ENCODE measurements at regions of chr12 and their contacts with region 1.

Region 1: DNA sequence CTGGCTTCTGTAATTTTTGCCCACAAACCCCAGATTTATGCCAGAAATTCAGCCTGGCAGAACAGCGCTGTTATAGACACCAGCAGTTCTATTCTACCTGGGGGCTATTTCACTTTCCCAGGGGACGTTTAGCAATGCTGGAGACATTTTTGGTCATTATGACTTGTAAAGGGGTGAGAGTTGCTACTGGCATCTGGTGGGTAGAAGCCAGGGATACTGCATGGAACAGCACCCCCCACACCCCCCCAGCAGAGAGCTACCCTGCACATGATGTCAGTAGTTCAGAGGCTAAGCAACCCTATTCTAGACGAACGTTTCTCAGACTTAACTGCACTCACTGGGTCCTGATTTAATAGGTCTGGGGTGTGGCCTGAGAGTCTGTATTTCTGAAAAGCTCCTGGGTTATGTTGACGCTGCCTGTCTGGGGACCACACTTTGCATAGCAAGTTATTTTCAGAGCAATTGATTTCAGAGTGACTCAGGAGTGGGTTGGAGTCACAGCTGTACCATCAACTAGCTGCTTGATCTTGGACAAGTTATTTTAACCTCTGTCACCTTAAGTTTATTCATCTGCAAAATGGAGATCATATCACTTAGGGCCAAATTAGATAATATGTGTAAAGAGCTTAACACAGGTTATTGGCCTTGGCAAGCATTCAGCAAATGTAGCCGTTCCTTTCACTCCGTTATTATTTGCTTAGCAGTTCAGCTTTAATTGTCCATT is 48.5 kb downstream of the CHST11 start:
- DNase-seq: peak; percentile 64
- ATAC-seq: peak; percentile 88
- H3K4me3 ChIP-seq: peak overlapping the region; percentile 37; the same call in 1 of the 2 replicates
- H3K27ac ChIP-seq: peak overlapping the region; percentile 43; the same call in 1 of the 2 replicates
- H3K4me1 ChIP-seq: peaks cover 43% of the 10 kb centered on the region
- H3K27me3 ChIP-seq: no peaks in the 10 kb centered on the region
- CTCF ChIP-seq: no peak
- EP300 ChIP-seq: no peak
- POLR2A ChIP-seq: no peak
- RAD21 ChIP-seq: no peak

Region 2: DNA sequence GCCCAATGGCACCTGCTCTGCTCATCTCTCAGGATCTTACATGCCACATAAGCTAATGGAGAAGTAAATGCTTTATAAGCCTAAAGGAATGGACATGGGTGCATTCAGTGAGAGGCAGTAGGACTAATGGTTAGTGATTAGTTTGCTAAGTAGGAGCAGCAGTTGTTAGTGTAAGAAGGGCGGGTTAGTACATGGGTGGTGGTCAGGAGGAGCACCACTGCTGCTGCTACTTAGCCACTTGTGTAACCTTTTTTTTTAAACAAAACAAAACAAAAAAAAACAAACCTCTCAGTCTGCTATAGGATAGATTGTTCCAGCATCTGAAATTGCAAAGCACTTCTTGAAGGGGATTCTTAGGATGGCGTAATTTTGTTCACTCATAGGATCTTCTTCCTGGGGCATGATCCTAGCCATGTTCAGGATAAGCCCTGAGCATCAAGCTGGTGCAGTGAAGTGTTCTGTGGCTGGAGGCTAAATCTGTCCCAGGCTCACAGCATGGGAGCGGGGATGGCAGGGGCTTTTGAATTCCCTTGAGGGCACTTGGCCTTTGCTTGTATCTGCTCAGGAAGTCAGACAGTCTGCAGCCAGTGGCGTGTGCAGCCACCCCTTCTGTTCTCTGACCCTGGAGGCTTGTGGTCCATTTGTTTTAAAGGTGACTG is 15.1 kb after region 1 on chr12:
- CTCF ChIA-PET with region 1: interaction called, 4 read pairs
- POLR2A ChIA-PET with region 1: interaction called, 3 read pairs
- RAD21 ChIA-PET with region 1: interaction called, 4 read pairs
- SMC1A ChIA-PET with region 1: interaction called, 25 read pairs
- in situ Hi-C with region 1: no loop called
- intact Hi-C with region 1: no loop called
- DNase-seq: peak; percentile 75
- ATAC-seq: peak; percentile 79
- H3K4me3 ChIP-seq: no peak overlapping the region
- H3K27ac ChIP-seq: peak overlapping the region; percentile 60
- H3K4me1 ChIP-seq: peaks cover 49% of the 10 kb centered on the region
- H3K27me3 ChIP-seq: no peaks in the 10 kb centered on the region
- CTCF ChIP-seq: no peak
- EP300 ChIP-seq: peak; percentile 31 to 50; a peak in 1 of 4 replicates
- POLR2A ChIP-seq: no peak
- RAD21 ChIP-seq: no peak

Region 3: DNA sequence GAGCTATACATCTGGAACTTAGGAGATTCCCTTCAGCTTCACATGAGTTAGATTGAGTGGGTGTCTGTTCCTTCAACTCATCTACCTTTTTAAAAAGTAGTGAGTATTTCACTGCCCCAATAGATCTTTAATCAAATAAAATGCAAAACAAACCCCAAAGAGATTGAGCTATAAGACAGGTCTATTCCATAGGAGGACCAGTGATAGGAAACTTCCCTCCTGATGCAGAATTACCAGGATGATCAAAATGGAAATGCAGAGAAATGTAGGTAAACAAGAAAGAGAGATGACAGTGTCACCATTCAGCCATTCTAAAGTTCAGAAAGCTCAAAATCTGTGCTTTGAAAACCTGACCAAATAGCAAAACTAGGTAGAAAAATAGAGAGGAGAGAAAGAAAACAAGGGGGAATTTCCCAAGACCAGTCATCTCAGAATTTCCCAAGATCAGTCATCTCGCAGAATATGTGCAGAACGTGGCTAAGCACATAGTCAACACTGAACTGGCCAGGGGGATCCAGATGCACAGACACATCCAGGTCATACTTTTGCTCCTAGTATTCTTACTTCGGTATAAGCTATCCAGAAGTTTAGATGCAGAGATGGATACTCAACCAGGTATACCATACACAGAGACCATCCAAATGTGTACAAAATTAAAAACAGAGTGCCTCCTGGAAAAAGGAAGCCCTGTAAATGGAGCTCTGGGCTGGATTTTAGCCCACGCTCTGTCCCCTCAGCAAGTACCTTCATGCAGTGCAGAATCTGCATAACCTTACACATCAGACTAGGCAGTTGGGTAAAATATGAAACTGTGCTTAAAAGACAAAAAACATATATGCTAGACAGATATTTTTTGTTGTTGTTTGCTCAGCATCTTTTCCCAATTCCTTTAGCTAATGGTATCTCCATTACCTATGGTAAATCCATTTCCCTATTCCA is 425.4 kb after region 1 on chr12:
- CTCF ChIA-PET with region 1: no interaction called
- POLR2A ChIA-PET with region 1: no interaction called
- RAD21 ChIA-PET with region 1: no interaction called
- SMC1A ChIA-PET with region 1: no interaction called
- in situ Hi-C with region 1: no loop called
- intact Hi-C with region 1: no loop called
- DNase-seq: peak; percentile 90
- ATAC-seq: peak; percentile 97
- H3K4me3 ChIP-seq: peak overlapping the region; percentile 48; the same call in 1 of the 2 replicates
- H3K27ac ChIP-seq: peak overlapping the region; percentile 93
- H3K4me1 ChIP-seq: peaks cover 49% of the 10 kb centered on the region
- H3K27me3 ChIP-seq: no peaks in the 10 kb centered on the region
- CTCF ChIP-seq: no peak
- EP300 ChIP-seq: peak; percentile 65 to 97
- POLR2A ChIP-seq: no peak
- RAD21 ChIP-seq: 0 out of 2 replicates have a peak, but pooled peaks have one; percentile 3

Measured in GM12878 (cell line).